ENCODE measurements at regions of chr17 and their contacts with region 1.

Region 1: GRCh38 chr17:44533533-44534246 is 23.6 kb upstream of the FZD2 start:
- DNase-seq: no peak
- H3K4me3 ChIP-seq: peak overlapping the region; percentile 48
- CTCF ChIP-seq: peak; percentile 97

Region 2: GRCh38 chr17:44556832-44557606 is 23.3 kb after region 1 on chr17 and contains the start of gene FZD2:
- CTCF ChIA-PET with region 1: interaction called, 82 read pairs
- POLR2A ChIA-PET with region 1: interaction called, 42 read pairs
- DNase-seq: peak; percentile 94
- H3K4me3 ChIP-seq: peak within 1 kb of the TSS; percentile 90
- CTCF ChIP-seq: no peak

Region 3: DNA sequence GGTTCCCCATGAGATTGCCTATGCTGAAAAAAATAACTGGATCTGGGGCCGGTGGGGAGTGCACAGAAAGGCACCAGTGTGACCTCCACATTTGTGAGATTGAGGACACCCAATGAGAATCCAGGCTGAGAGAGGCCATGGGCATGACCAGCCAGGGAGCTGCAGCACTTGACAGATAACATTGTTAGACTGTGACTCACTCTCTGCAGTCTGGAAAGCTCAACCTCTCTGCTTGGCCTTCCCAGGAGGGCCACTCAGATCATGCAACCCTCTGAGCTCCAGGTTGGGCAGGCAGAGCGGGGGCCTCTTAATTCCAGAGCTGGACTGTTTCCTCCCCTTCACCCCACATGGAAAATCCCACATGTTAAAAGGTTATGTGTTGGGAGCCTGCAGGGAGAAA is 53.6 kb after region 1 on chr17:
- CTCF ChIA-PET with region 1: interaction called, 10 read pairs
- POLR2A ChIA-PET with region 1: interaction called, 3 read pairs
- DNase-seq: peak; percentile 86
- H3K4me3 ChIP-seq: no peak overlapping the region
- CTCF ChIP-seq: no peak

Region 4: GRCh38 chr17:44636562-44636961 is 102.9 kb after region 1 on chr17:
- CTCF ChIA-PET with region 1: interaction called, 309 read pairs
- POLR2A ChIA-PET with region 1: no interaction called
- DNase-seq: peak; percentile 23
- H3K4me3 ChIP-seq: no peak overlapping the region
- CTCF ChIP-seq: peak; percentile 49

Region 5: DNA sequence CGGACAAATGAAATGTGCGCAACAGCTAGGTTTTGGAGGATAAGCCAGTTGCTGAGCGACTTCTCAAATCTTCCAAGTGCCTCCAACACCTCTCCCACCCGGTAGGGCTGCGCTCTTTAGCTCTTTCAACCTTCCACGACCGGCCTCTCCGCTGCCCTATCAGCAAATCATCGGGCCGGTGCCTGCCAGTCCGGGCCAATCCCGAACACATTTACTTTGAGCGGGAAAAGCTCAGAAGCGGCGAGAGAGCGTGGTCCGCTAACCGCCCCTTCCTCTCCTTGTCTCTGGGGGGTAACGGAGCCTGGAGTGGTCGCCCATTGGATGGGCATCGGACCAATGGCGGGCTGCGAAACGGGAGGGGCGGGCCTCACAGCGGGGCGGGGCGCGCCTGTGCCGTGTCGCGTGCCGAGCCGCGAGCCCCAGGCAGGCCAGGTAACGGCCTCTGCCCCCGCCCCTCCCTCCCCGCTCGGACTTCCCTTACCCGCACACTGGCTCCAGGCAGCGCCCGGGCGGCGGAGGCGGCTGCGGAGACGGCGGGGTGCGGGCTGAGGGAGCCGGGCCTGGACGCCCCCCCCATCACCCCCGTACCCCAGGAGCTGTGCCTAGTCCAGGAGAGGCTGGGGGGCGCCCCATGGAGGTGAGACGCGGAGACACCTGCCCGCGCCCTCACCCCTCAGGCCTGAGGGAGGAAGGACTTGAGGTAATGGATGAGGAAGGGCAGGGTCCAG is 122.5 kb after region 1 on chr17 and contains the start of gene MEIOC:
- CTCF ChIA-PET with region 1: interaction called, 10 read pairs
- POLR2A ChIA-PET with region 1: no interaction called
- DNase-seq: no peak
- H3K4me3 ChIP-seq: peak within 1 kb of the TSS; percentile 36
- CTCF ChIP-seq: no peak

Region 6: DNA sequence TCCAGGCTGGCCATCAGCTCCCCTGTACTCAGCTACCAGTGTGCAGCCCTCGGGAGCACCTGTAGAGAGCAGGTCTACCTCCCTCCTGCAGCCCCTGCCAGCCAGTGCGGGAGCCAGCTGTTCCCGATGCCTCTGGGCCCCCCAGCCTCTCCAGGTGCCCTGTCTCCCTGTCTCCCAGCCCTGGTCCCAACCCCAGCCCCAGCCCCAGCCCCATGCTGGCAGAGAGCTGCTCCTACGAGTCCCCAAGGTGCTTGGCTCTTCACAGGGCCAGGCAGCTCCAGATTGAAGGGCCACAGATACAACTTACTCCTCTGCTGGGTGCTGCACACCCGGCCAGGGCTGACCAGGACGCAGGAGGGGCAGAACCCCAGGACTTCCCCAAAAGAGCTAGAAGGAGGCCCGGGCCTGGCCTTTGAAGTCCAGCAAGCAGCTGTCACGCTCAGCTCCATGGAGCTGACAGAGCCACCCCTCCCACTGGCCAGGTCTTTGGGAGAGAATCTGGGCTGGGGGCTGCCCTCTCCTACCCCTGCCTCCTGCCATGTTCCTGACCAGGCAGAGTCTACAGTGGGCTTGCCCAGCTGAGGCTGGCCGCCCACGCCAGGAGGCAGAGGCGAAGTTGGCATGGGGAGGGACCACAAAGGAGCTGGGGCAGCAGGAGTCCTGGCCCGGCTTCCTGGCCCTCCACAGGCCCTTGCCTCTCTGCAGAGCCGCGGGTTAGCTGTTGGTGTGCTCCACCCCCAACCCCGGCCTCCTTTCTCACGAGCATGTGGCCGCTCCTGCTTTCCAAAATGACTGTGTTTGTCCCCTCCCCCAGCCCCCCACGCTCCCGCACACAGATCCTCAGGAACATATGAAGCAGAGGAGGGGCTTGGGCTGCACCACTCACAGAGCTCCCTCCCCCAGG is 215.6 kb after region 1 on chr17:
- CTCF ChIA-PET with region 1: no interaction called
- POLR2A ChIA-PET with region 1: no interaction called
- DNase-seq: no peak
- H3K4me3 ChIP-seq: no peak overlapping the region
- CTCF ChIP-seq: no peak

Measured in AG04449 (cell line).